ENCODE measurements at regions of chr4 and their contacts with region 1.

Region 1: GRCh38 chr4:123671633-123672404 is 275.2 kb downstream of the SPRY1 start:
- DNase-seq: no peak
- H3K4me3 Mint-ChIP-seq: no peak overlapping the region
- H3K27ac Mint-ChIP-seq: no peak overlapping the region
- H3K4me1 Mint-ChIP-seq: peaks cover 29% of the 10 kb centered on the region
- H3K27me3 Mint-ChIP-seq: peaks cover 72% of the 10 kb centered on the region

Region 2: DNA sequence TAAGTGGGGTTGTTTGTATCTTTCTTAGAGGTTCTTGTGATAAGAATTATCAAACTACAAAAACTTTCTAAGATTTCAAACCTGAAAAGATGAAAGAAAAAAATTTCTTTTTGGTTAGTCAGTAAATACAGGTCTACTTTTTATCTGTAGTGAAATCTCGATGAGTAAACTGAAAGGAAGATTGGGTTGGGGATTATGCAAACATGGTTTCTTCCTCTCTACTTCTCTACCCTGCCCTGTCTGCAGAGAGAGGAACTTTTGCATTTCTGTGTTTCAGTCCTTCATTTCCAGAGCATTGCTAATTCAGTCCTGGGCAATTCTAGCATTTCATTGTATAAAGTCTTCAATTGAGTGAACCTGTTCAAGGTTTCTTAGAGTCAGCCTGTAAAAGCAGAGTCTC is 1163.7 kb before region 1 on chr4:
- intact Hi-C with region 1: loop called (anchors 5 kb)
- DNase-seq: no peak
- H3K4me3 Mint-ChIP-seq: peak overlapping the region; percentile 54
- H3K27ac Mint-ChIP-seq: peak overlapping the region; percentile 78
- H3K4me1 Mint-ChIP-seq: peaks cover 57% of the 10 kb centered on the region
- H3K27me3 Mint-ChIP-seq: peaks cover 22% of the 10 kb centered on the region

Region 3: DNA sequence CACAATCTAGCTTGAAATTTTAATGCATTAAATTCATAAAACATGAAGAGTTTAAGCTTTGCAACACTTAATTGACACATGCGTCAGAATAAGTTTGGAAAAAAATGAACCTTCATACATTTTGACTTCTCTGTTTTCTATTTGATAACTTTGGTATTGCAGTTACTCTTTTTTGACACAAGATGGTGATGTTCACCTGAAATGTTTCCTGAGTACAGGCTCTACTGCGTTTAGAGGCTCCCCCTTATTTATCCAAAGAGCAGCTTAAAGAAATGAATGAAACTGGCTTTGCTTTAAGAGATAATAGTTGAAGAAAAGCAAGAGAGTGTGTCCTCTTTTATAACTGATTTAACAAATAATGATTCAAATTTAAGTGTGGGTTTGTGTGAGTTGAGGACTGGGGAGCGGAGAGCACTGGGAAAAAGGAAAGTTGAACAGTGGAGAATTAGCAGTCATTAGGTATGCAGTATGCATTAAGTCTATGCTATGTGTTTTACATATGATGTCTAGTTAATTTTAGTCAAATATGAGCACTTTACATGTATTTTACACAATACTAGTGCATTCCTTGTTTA is 568.8 kb before region 1 on chr4:
- intact Hi-C with region 1: loop called (anchors 5 kb)
- DNase-seq: no peak
- H3K4me3 Mint-ChIP-seq: no peak overlapping the region
- H3K27ac Mint-ChIP-seq: no peak overlapping the region
- H3K4me1 Mint-ChIP-seq: peaks cover 2% of the 10 kb centered on the region
- H3K27me3 Mint-ChIP-seq: no peaks in the 10 kb centered on the region

Region 4: DNA sequence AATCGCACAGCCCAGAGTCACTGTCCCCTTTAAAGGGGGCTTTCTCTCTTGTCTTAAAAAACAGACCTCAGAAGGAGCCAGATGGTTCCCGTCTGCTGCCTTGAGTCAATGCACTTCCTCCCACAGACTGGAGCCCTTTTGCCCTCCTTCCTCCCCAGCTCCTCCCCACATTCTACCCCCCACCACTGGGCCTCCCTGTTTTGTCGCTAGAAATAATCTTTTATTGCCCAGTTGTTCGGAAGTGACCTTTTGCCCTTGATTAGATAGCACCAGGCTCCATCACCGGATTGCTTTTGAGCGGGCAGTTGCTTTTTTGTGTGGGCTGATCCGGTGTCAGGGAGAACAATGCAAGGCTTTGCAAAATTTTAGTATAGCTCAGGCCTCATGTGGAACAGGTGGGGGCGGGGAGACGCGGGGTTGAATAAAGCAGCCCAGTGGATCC is 227.5 kb before region 1 on chr4:
- intact Hi-C with region 1: loop called (anchors 1 kb)
- DNase-seq: peak; percentile 28
- H3K4me3 Mint-ChIP-seq: peak overlapping the region; percentile 35
- H3K27ac Mint-ChIP-seq: peak overlapping the region; percentile 78
- H3K4me1 Mint-ChIP-seq: peaks cover 30% of the 10 kb centered on the region
- H3K27me3 Mint-ChIP-seq: no peaks in the 10 kb centered on the region

Region 5: GRCh38 chr4:123640271-123640670 is 31.5 kb before region 1 on chr4:
- intact Hi-C with region 1: loop called (anchors 1 kb)
- DNase-seq: no peak
- H3K4me3 Mint-ChIP-seq: no peak overlapping the region
- H3K27ac Mint-ChIP-seq: peak overlapping the region; percentile 65
- H3K4me1 Mint-ChIP-seq: peaks cover 6% of the 10 kb centered on the region
- H3K27me3 Mint-ChIP-seq: peaks cover 9% of the 10 kb centered on the region

Region 6: DNA sequence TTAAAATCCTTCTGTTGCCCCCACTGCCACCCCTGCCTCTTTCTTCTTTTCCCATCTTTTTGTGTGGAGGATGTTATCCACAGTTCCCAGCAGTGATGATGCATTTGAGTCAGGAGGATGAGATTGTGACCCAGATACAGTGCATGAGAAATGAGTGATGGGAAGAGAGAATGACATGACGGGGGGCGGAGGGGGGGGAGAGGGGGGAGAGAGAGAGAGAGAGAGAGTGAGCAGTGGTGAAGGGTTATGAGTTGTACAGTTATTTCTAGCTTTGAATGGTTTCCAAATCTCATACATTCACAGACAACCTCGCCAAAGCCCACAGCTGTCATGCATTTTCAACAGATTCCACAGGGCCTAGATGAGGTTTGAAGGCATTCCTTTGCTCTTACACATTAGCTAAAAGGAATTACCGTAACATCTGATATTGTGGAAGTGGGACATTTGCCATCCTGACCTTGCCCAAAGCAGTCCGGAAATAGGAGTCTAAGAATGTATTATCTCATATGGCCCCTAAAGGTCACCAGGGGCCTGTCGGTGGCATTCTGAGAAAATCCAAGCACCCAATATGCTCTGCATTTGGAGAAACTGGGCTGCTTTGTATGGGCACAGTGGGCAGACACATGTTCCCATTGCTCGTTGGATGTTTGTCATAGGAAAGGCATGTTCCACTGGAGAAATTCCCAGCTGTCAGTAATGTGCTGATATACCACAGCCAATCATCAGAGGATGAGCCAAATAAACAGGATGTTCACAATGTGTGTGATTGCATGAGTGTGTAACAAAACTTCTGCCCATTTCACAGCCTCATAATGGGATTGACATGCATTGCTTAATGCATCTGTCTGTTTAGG is 160.6 kb after region 1 on chr4:
- intact Hi-C with region 1: no loop called
- DNase-seq: no peak
- H3K4me3 Mint-ChIP-seq: no peak overlapping the region
- H3K27ac Mint-ChIP-seq: no peak overlapping the region
- H3K4me1 Mint-ChIP-seq: no peaks in the 10 kb centered on the region
- H3K27me3 Mint-ChIP-seq: no peaks in the 10 kb centered on the region

Measured in activated T-helper 2 cell treated with anti-CD3 and anti-CD28 coated beads, Interferon-gamma antibody, Interleukin-2, Interleukin-4, amounts not matched to agents 10 μg/mL and 5 μg/mL and 100 μg/mL, durations not matched to agents 14 hours and 24 hours and 36 hours (primary cell).